ENCODE measurements at regions of chr18 and their contacts with region 1.

Region 1: GRCh38 chr18:9334329-9334972 is at the start of gene TWSG1:
- DNase-seq: peak; percentile 86
- ATAC-seq: peak; percentile 94
- H3K4me3 Mint-ChIP-seq: peak within 1 kb of the TSS; percentile 89
- H3K27ac Mint-ChIP-seq: peak within 1 kb of the TSS; percentile 60
- H3K4me1 Mint-ChIP-seq: peaks cover 20% of the 10 kb centered on the region
- H3K27me3 Mint-ChIP-seq: no peaks in the 10 kb centered on the region
- CTCF ChIP-seq: no peak
- total RNA-seq, gene TWSG1: 4.1 and 4.8 TPM in 2 replicates

Region 2: DNA sequence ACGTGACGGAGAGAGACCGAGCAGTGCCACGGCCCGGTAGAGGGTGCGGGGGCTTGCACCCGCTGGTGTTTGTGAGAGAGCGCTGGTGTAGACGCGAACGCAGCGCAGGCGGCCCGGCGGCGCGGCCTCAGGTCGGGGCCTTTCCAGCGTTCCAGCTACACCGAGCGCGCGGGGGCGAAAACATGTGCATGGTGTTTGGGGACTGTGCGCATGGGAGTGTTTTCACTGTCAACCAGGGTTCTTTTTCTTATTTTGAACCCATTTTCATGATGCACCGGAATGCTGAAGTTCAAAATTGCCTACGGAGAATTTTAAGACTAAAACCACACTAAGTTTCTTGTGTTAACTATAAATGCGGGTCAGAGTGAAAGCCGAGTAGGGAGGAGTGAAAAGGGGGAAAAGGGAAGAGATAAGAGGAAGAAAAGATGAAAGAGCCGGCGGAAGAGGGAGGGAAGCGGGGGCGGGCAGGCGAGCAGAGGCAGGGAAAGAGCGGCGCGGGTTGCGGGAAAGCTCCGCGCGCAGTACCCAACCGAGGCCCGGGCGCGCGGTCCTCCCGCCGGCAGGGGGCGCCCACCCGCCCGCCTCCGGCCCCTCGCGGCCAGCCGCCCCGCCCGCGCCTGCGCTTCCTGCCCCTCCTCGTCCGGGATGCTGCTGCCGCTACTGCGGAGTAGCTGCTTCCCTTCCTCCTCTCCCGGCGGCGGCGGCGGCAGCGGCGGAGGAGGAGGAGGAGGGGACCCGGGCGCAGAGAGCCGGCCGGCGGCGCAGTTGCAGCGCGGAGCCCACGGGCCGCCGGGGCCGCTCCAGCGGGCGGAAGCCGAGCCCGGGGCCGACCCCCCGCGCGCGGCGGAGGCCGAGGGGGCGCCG is 725.4 kb before region 1 on chr18 and contains the start of gene RAB12:
- CTCF ChIA-PET with region 1: no interaction called
- POLR2A ChIA-PET with region 1: no interaction called
- intact Hi-C with region 1: loop called (anchors 1 kb)
- DNase-seq: peak; percentile 87
- ATAC-seq: peak; percentile 81
- H3K4me3 Mint-ChIP-seq: peak within 1 kb of the TSS; percentile 89
- H3K27ac Mint-ChIP-seq: peak within 1 kb of the TSS; percentile 89
- H3K4me1 Mint-ChIP-seq: peaks cover 76% of the 10 kb centered on the region
- H3K27me3 Mint-ChIP-seq: no peaks in the 10 kb centered on the region
- CTCF ChIP-seq: no peak
- total RNA-seq, gene RAB12: 25.3 and 27.5 TPM in 2 replicates

Region 3: DNA sequence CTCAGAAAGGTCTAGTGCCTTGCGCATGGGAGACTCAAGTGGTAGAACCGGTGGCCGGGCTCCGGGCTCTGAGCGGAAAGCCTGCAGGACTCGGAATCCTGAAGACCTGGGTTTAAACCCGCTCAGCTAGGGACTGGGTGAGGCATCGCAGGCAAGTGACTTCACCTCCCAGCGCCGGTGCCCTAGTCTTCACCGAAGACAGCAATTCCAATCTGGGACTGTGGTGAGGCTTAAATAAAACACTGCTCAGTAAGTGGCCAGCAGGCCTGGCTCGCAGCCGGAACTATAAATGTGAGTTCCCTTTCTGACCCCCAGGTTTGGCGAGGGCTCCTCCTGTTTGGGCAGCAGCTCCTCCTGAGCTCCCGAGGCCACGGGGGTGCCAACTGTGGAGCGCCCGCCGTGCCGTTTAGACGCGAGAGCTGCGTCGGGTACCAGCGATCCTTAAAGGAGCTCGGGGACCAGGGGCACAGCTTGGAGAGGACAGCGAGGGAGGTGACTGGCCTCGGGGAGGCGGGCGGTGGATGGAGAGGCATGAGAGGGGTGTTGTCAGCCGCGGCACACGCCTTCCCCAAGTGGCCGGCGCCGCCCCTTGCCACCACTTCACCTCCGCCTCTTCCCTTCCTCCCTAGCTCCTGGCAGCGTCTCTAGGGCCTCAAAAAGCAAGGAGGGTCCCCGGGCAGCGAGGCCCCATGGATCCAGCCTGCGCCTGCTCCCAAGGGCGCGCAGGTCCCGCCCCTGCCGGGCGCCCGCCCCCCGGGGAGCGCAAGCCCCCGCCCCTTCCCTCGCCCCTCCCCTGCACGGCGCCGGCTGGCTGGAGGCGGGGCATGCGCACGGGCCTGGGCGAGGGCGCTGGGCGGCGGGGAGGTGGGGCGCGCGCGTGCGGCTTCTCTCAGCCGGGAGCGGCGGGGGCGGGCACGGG is 629.8 kb before region 1 on chr18:
- CTCF ChIA-PET with region 1: no interaction called
- POLR2A ChIA-PET with region 1: no interaction called
- intact Hi-C with region 1: loop called (anchors 1 kb)
- DNase-seq: peak; percentile 89
- ATAC-seq: peak; percentile 92
- H3K4me3 Mint-ChIP-seq: peak overlapping the region; percentile 89
- H3K27ac Mint-ChIP-seq: peak overlapping the region; percentile 41
- H3K4me1 Mint-ChIP-seq: peaks cover 26% of the 10 kb centered on the region
- H3K27me3 Mint-ChIP-seq: peaks cover 14% of the 10 kb centered on the region
- CTCF ChIP-seq: no peak

Region 4: GRCh38 chr18:9102508-9103375 is 231.7 kb before region 1 on chr18 and contains the start of gene NDUFV2:
- CTCF ChIA-PET with region 1: no interaction called
- POLR2A ChIA-PET with region 1: no interaction called
- intact Hi-C with region 1: loop called (anchors 1 kb)
- DNase-seq: peak; percentile 99
- ATAC-seq: peak; percentile 96
- H3K4me3 Mint-ChIP-seq: peak within 1 kb of the TSS; percentile 94
- H3K27ac Mint-ChIP-seq: peak within 1 kb of the TSS; percentile 94
- H3K4me1 Mint-ChIP-seq: peaks cover 51% of the 10 kb centered on the region
- H3K27me3 Mint-ChIP-seq: no peaks in the 10 kb centered on the region
- CTCF ChIP-seq: no peak
- total RNA-seq, gene NDUFV2: 168 and 169 TPM in 2 replicates

Region 5: GRCh38 chr18:9366192-9366591 is 31.7 kb after region 1 on chr18:
- CTCF ChIA-PET with region 1: no interaction called
- POLR2A ChIA-PET with region 1: no interaction called
- intact Hi-C with region 1: no loop called
- DNase-seq: no peak
- ATAC-seq: no peak
- H3K4me3 Mint-ChIP-seq: no peak overlapping the region
- H3K27ac Mint-ChIP-seq: no peak overlapping the region
- H3K4me1 Mint-ChIP-seq: no peaks in the 10 kb centered on the region
- H3K27me3 Mint-ChIP-seq: no peaks in the 10 kb centered on the region
- CTCF ChIP-seq: no peak

Region 6: DNA sequence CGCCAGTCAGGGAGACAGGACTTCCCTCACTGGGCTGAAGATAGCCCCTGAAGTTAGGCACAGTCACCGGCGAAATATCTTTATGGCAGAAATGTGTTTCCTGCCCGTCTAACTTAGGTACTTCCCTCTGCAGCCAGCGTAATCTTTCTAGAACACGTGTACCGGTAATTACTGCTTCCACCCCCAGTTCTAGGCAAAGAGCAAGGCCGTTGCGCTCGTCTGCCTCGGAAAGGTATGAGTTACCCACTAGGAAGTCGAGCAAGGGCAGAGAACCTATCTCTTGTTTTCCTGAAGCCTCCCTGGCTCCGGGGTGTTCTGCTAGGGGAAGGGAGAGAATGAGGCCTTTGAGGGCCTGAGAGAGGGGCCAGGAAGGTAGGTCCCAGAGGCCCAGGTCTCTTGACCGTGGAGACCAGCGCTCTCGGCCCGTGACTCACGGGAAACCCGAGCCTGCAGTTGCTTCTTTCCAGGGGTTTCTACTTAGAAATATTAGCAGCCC is 70.2 kb after region 1 on chr18:
- CTCF ChIA-PET with region 1: no interaction called
- POLR2A ChIA-PET with region 1: no interaction called
- intact Hi-C with region 1: loop called (anchors 2 kb)
- DNase-seq: peak; percentile 23
- ATAC-seq: peak; percentile 84
- H3K4me3 Mint-ChIP-seq: peak overlapping the region; percentile 86
- H3K27ac Mint-ChIP-seq: peak overlapping the region; percentile 67
- H3K4me1 Mint-ChIP-seq: peaks cover 17% of the 10 kb centered on the region
- H3K27me3 Mint-ChIP-seq: no peaks in the 10 kb centered on the region
- CTCF ChIP-seq: no peak

Region 7: DNA sequence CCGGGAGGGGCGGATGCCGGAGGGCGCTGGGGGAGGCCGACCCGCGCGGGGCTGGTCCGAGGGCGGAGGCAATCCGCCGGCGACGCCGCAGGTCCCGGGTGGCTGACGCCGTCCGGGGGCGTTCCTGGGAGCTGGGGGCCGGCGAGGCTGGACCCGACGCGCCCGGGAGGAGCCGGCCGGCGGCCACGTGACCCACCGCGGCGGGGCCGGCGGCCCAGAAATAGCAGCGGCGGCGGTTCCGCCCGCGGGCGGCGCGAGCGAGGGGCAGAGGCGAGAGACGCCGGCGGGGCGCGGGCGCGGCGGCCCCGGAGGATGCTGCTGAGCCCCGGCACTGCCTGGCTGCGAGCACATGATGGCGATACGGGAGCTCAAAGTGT is 373.6 kb after region 1 on chr18 and contains the start of gene RAB31:
- CTCF ChIA-PET with region 1: no interaction called
- POLR2A ChIA-PET with region 1: interaction called, 4 read pairs
- intact Hi-C with region 1: loop called (anchors 5 kb)
- DNase-seq: peak; percentile 61
- ATAC-seq: peak; percentile 47
- H3K4me3 Mint-ChIP-seq: peak within 1 kb of the TSS; percentile 96
- H3K27ac Mint-ChIP-seq: peak within 1 kb of the TSS; percentile 95
- H3K4me1 Mint-ChIP-seq: peaks cover 54% of the 10 kb centered on the region
- H3K27me3 Mint-ChIP-seq: peaks cover 2% of the 10 kb centered on the region
- CTCF ChIP-seq: no peak
- total RNA-seq, gene RAB31: 33.0 and 36.0 TPM in 2 replicates

Region 8: GRCh38 chr18:10525371-10526210 is 1191.1 kb after region 1 on chr18 and contains the start of gene NAPG:
- CTCF ChIA-PET with region 1: no interaction called
- POLR2A ChIA-PET with region 1: no interaction called
- intact Hi-C with region 1: loop called (anchors 10 kb)
- DNase-seq: peak; percentile 86
- ATAC-seq: peak; percentile 91
- H3K4me3 Mint-ChIP-seq: peak within 1 kb of the TSS; percentile 99
- H3K27ac Mint-ChIP-seq: peak within 1 kb of the TSS; percentile 96
- H3K4me1 Mint-ChIP-seq: peaks cover 49% of the 10 kb centered on the region
- H3K27me3 Mint-ChIP-seq: no peaks in the 10 kb centered on the region
- CTCF ChIP-seq: no peak
- total RNA-seq, gene NAPG: 24.5 and 33.3 TPM in 2 replicates